ENCODE measurements at regions of chr2 and their contacts with region 1.

Region 1: DNA sequence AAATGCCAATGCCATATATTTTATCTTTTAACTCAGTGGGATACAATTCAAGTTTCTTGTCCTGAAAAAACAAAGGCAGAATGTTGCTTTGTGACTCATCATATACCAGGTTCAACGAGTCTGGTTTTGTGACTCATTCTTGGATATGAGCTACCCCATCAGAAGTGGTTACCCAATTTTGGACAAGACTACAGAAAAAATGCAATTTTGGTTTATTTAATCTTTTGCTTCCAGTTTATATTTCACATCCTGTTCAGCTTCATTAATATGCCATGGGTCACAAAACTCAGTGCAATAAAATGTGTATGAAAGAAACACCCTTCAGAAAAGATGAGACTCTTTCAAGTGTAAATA is 25.0 kb downstream of the FN1 start:
- DNase-seq: peak; percentile 89
- H3K4me3 ChIP-seq: no peak overlapping the region
- H3K27ac ChIP-seq: peak overlapping the region; percentile 50
- H3K4me1 ChIP-seq: peaks cover 34% of the 10 kb centered on the region
- H3K27me3 ChIP-seq: no peaks in the 10 kb centered on the region
- CTCF ChIP-seq: no peak
- POLR2A ChIP-seq: no peak

Region 2: DNA sequence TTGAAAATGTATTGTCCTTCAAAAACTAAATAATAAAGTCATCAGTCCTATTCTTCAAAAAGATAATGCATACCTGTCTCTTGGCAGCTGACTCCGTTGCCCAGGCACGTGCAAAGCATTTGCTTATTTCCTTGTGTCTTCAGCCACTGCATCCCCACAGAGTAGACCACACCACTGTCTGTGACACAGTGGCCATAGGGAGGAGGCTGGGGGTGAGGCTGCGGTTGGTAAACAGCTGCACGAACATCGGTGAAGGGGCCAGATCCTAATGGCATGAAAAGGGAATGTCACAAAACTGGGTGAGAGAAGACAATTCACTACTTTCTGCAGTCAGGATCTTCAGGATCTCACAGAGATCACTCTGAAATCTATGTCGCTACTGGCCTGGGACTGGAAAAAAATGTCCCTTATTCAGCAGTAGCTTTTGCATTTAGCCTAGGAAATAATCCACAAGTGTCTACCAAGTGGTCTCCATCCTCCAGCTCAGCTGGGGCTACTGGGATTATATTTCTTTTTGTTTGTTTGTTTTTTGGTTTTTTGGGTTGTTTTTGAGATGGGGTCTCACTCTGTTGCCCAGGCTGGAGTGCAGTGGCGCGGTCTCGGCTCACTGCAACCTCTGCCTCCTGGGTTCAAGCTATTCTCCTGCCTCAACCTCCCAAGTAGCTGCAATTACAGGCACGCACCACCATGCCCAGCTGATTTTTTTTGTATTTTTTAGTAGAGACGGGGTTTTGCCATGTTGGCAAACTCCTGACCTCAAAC is 14.3 kb after region 1 on chr2:
- CTCF ChIA-PET with region 1: interaction called, 6 read pairs
- POLR2A ChIA-PET with region 1: interaction called, 3 read pairs
- dilution Hi-C with region 1: no loop called
- intact Hi-C with region 1: loop called (anchors 1 kb)
- DNase-seq: no peak
- H3K4me3 ChIP-seq: no peak overlapping the region
- H3K27ac ChIP-seq: no peak overlapping the region
- H3K4me1 ChIP-seq: peaks cover 60% of the 10 kb centered on the region
- H3K27me3 ChIP-seq: no peaks in the 10 kb centered on the region
- CTCF ChIP-seq: no peak
- POLR2A ChIP-seq: peak; percentile 58

Region 3: GRCh38 chr2:215654148-215654819 is 243.4 kb after region 1 on chr2:
- CTCF ChIA-PET with region 1: no interaction called
- POLR2A ChIA-PET with region 1: no interaction called
- dilution Hi-C with region 1: no loop called
- intact Hi-C with region 1: no loop called
- DNase-seq: no peak
- H3K4me3 ChIP-seq: no peak overlapping the region
- H3K27ac ChIP-seq: no peak overlapping the region
- H3K4me1 ChIP-seq: peaks cover 15% of the 10 kb centered on the region
- H3K27me3 ChIP-seq: no peaks in the 10 kb centered on the region
- CTCF ChIP-seq: no peak
- POLR2A ChIP-seq: no peak